Dorsolateral prefrontal cortex (tissue), 120 donors: ENCODE measurements at regions of chr18 and their contacts with region 1.

Region 1: DNA sequence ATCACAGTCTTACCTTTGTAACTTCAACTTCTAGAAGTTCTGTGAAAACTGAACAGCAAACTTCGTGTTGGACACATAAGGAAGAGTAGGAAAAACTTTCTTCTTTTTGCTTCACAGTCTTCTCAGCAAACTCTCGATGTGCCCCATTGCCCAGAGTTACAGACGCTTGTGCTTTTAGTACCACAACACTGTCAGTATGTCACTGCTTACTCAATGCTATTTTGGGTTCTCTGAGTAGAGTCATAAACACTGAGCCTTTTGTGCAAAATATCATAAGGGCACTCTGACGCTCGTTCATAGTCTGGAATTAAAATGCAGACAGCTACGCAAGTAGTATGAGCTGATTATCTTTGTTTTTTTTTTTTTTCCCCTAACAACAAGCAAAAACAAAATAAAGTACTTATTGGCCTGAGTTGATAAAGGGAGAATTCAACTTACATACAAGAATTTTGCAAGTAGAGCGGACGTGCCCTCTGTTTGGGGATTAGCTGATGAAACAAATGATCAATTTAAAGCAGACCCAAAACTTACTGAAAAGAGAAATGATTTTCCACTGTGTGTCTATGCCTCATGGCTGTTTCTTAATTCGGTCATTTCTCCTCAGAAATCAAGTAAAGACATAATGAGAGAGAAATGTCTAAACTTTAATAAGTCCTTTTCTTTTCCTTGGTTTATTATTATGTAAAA is at the start of gene CDH19:
- DNase-seq: peak in 7 of 10 donors; percentile 11 to 59 (median 43)
- H3K4me3 ChIP-seq: peak within 1 kb of the TSS in 58 of 59 donors; percentile 8 to 70 (median 46)
- H3K27ac ChIP-seq: peak within 1 kb of the TSS in 58 of 59 donors; percentile 38 to 91 (median 81)
- H3K27me3 ChIP-seq: no peaks in the 10 kb centered on the region
- CTCF ChIP-seq: peak in 8 of 56 donors; percentile 4 to 22 (median 6)
- total RNA-seq, gene CDH19: 3.2 to 71.4 (median 12.6) TPM

Region 2: GRCh38 chr18:65968239-65969004 is 635.7 kb before region 1 on chr18:
- intact Hi-C with region 1: no loop called
- DNase-seq: no peak
- H3K4me3 ChIP-seq: no peak overlapping the region
- H3K27ac ChIP-seq: no peak overlapping the region
- H3K27me3 ChIP-seq: peaks cover 0 to 2% (median 0%) of the 10 kb centered on the region in 45 donors
- CTCF ChIP-seq: peak in 31 of 56 donors; percentile 8 to 45 (median 20)

Region 3: GRCh38 chr18:66066191-66066590 is 537.9 kb before region 1 on chr18:
- intact Hi-C with region 1: no loop called
- DNase-seq: no peak
- H3K4me3 ChIP-seq: no peak overlapping the region
- H3K27ac ChIP-seq: no peak overlapping the region
- H3K27me3 ChIP-seq: no peaks in the 10 kb centered on the region
- CTCF ChIP-seq: no peak

Region 4: GRCh38 chr18:66566616-66567015 is 37.5 kb before region 1 on chr18:
- intact Hi-C with region 1: loop called in 1 of 2 experiments (anchors 5 kb)
- DNase-seq: no peak
- H3K4me3 ChIP-seq: peak overlapping the region in 1 of 59 donors; percentile 10
- H3K27ac ChIP-seq: peak overlapping the region in 6 of 59 donors; percentile 7 to 75 (median 38)
- H3K27me3 ChIP-seq: peaks cover 0 to 6% (median 0%) of the 10 kb centered on the region in 45 donors
- CTCF ChIP-seq: no peak

Region 5: DNA sequence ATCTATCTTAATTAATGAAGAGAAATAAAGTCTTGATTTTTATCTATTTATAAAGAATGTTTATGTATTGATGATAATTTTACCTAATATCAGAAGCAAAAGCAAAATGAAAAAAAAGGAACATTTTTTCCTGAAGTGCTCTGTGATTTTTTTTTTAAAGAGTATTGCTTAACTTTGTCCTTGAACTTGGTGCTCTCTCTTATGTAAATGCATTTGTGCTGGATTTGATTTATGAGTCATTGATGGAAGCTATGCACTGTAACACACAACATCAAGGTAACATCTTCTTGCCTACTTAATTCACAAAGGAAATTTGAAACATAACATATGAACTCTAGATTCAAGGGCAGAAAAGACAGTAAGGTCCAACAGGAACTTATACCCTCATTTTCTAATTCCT is 312.8 kb after region 1 on chr18:
- intact Hi-C with region 1: no loop called
- DNase-seq: no peak
- H3K4me3 ChIP-seq: no peak overlapping the region
- H3K27ac ChIP-seq: no peak overlapping the region
- H3K27me3 ChIP-seq: no peaks in the 10 kb centered on the region
- CTCF ChIP-seq: no peak